ENCODE measurements at regions of chr9 and their contacts with region 1.

Region 1: DNA sequence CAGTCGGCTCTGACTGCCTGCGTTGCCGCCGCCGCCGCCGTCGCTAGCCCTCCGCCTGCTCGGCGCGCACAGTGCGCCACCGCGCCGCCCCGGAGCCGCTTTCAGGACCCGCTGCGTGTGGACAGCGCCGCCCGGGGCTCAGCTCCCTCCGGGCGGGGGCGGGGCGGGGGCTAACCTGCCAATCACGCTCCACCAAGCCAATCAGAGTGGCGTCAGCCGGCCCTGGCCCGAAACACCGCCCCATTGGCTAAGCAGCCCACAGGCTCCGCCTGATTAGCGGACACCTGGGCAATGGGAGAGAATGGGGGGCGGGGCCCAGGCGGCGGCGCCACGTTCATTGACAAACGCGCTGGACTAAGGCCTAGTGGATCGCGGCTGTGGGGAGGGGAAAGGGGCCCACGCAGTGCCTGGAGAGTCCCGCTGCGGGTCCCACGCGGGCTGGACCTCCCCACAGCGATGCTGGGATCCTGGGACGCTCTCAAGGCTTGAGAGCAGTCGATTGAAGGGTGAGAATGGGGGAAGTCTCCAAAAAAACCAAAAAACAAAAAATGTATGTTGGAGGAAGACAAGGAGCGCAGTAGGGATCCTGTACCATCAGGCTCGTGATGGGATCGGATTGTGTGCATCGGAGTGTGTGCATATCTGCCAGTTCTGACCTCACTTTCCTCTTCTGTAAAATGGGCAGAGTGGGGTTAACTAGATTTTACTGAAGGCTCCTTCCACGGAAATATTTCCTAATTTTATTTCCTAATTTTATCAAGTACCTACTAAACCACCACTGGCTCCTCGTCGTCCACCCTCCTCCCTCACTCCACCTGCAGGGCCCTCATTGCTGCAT is 6.3 kb downstream of the PAX5 start:
- DNase-seq: peak; percentile 64 to 73
- H3K4me3 ChIP-seq: peak overlapping the region in 2 of 3 donors; percentile 43 to 63
- H3K27ac ChIP-seq: no peak overlapping the region
- H3K4me1 ChIP-seq: peaks cover 10 to 27% of the 10 kb centered on the region in 2 donors
- H3K27me3 ChIP-seq: peaks cover 18 to 100% of the 10 kb centered on the region in 2 donors
- CTCF ChIP-seq: no peak
- POLR2A ChIP-seq: no peak

Region 2: GRCh38 chr9:36946653-36947052 is 81.1 kb before region 1 on chr9:
- intact Hi-C with region 1: no loop called
- DNase-seq: no peak
- H3K4me3 ChIP-seq: no peak overlapping the region
- H3K27ac ChIP-seq: no peak overlapping the region
- H3K4me1 ChIP-seq: no peaks in the 10 kb centered on the region
- H3K27me3 ChIP-seq: peaks cover 0 to 13% of the 10 kb centered on the region in 2 donors
- CTCF ChIP-seq: no peak
- POLR2A ChIP-seq: no peak

Region 3: GRCh38 chr9:37410969-37411785 is 383.4 kb after region 1 on chr9:
- intact Hi-C with region 1: loop called (anchors 5 kb)
- DNase-seq: no peak
- H3K4me3 ChIP-seq: no peak overlapping the region
- H3K27ac ChIP-seq: no peak overlapping the region
- H3K4me1 ChIP-seq: no peaks in the 10 kb centered on the region
- H3K27me3 ChIP-seq: no peaks in the 10 kb centered on the region
- CTCF ChIP-seq: no peak
- POLR2A ChIP-seq: no peak

Region 4: DNA sequence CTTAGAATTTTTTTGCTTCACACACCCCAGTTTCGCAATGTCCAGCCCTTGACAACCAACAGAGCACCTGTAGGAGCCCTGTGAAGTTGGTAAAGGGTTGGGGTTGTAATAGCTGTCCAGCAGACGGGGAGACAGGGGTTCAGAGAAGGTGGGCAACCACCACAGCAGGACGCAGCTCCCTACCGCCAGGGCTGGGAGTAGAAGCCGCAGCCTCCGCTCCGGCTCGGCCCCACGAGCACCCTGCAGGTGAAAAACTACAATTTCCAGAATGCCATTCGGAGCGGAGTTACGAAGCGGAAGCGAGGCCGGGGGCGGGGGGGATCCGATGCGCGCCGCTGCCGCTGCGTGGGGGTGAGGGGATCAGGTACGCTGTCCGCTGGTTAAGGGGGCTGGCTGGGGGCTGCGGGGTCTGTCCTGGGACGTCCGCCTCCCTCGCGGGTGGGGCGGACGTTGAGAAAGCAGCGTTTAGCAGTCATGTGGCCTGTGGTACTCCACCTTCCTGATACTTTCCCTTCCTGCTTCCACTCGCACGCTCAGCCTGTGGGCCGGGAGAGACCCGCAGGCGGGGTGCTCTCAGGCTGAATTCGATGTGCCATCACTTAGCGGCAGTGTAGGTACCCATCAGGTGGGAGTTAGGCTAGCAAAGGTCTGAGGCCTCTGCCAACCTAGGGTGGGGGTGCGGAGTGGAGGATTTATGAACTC is 725.8 kb after region 1 on chr9 and contains the start of gene TRMT10B:
- intact Hi-C with region 1: no loop called
- DNase-seq: peak in 1 of 2 donors; percentile 26
- H3K4me3 ChIP-seq: peak within 1 kb of the TSS; percentile 62 to 87 (median 78)
- H3K27ac ChIP-seq: peak within 1 kb of the TSS; percentile 91 to 92
- H3K4me1 ChIP-seq: peaks cover 0 to 7% of the 10 kb centered on the region in 2 donors
- H3K27me3 ChIP-seq: no peaks in the 10 kb centered on the region
- CTCF ChIP-seq: no peak
- POLR2A ChIP-seq: no peak
- total RNA-seq, gene TRMT10B: 6.7 to 12.1 (median 11.1) TPM

Measured in breast epithelium (tissue), 4 donors.